Gastrocnemius medialis (tissue), 4 donors: ENCODE measurements at regions of chr16 and their contacts with region 1.

Region 1: DNA sequence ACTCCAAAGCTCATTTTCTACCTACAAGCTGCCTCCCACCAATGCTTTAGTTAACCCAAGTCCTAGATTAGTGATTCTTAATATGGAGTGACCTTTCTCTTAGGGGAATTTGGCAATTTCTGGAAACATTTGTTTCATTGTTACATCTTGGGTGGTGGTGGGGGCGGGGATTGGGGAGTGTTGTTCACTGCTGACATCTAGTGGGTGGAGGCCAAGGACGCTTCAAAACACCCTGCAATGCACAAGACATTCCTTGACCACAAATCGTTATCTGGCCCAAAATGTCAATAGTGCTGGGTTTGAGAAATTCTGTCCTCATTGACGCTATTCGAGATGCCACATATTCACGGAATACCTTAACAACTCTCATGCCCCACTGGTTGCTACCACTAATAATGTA is 282.9 kb downstream of the RBFOX1 start:
- DNase-seq: peak in 1 of 2 donors; percentile 25
- ATAC-seq: peak in 1 of 2 donors; percentile 69
- H3K4me3 ChIP-seq: no peak overlapping the region
- H3K27ac ChIP-seq: no peak overlapping the region
- H3K4me1 ChIP-seq: peaks cover 0 to 4% of the 10 kb centered on the region in 2 donors
- H3K27me3 ChIP-seq: no peaks in the 10 kb centered on the region
- CTCF ChIP-seq: peak in 3 of 5 experiments; percentile 13 to 42 (median 36)
- POLR2A ChIP-seq: no peak

Region 2: GRCh38 chr16:7405166-7405852 is 210.3 kb before region 1 on chr16:
- in situ Hi-C with region 1: loop called in 3 of 4 experiments (anchors 25 kb)
- intact Hi-C with region 1: loop called (anchors 2 kb)
- DNase-seq: peak; percentile 70 to 86
- ATAC-seq: peak; percentile 93 to 97
- H3K4me3 ChIP-seq: peak overlapping the region in 1 of 4 donors; percentile 31
- H3K27ac ChIP-seq: peak overlapping the region; percentile 55 to 75 (median 66)
- H3K4me1 ChIP-seq: peaks cover 45 to 50% of the 10 kb centered on the region in 2 donors
- H3K27me3 ChIP-seq: no peaks in the 10 kb centered on the region
- CTCF ChIP-seq: peak; percentile 48 to 75 (median 59)
- POLR2A ChIP-seq: no peak

Region 3: DNA sequence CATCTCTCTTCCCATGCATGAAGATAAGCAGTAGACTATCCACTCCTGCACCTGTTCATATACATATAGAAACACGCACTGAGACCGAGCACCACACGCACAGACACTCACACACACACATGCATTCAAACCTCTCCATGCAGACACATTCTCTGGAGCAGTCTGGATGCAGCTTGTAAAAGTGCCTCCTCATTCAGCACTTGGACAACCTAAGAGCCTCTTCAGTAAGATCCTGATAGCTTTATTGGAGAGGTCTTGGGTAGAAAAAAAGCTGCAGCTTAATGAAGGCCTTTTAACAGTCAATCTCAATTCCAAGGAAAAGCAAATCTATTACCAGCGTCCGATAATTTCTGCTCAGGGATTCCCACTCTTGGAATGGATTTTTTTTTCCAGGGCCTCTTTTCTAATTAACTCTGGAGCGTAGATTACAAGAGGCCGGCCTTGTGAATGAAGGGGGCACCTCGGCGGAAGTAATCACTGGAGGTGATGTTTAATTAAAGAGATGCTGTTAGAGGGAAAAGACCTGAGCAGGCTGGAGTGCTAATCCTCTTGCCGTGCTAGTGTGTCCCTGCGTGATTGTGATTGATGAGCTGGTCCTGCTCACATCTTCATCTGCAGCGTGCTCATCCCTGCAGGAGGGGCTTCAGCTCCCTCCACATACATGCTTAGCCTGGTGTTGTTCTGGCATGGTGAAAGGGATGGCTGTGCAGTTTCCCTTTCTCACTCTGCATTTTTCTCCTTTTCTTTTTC is 127.8 kb before region 1 on chr16:
- in situ Hi-C with region 1: no loop called
- intact Hi-C with region 1: no loop called
- DNase-seq: no peak
- ATAC-seq: no peak
- H3K4me3 ChIP-seq: no peak overlapping the region
- H3K27ac ChIP-seq: no peak overlapping the region
- H3K4me1 ChIP-seq: peaks cover 2 to 8% of the 10 kb centered on the region in 2 donors
- H3K27me3 ChIP-seq: no peaks in the 10 kb centered on the region
- CTCF ChIP-seq: no peak
- POLR2A ChIP-seq: no peak

Region 4: DNA sequence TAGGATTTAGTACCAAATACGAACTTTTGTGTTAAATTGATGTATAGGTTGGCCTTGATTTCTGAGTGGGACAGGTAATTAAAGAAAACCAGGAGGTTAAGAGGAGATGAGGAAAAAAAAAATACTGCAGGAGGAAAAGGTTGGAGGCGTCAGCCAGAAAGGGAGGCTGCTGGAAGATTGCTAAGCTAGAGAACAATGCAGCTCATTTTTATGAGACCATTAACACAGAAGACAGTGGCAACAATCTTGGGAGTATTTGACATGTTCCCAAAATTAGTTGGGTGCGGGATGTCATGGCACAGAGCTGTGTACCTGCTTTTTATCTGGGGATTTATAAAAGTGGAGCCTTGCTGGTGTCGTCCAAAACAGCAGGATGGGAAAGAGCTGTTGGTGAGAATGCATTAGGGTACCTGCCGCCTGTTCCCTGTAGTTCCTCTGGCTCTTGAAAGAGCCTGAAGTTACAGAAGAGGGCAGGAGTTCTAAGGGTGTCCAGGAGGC is 53.6 kb before region 1 on chr16:
- in situ Hi-C with region 1: no loop called
- intact Hi-C with region 1: no loop called
- DNase-seq: no peak
- ATAC-seq: no peak
- H3K4me3 ChIP-seq: no peak overlapping the region
- H3K27ac ChIP-seq: no peak overlapping the region
- H3K4me1 ChIP-seq: no peaks in the 10 kb centered on the region
- H3K27me3 ChIP-seq: no peaks in the 10 kb centered on the region
- CTCF ChIP-seq: no peak
- POLR2A ChIP-seq: no peak

Region 5: DNA sequence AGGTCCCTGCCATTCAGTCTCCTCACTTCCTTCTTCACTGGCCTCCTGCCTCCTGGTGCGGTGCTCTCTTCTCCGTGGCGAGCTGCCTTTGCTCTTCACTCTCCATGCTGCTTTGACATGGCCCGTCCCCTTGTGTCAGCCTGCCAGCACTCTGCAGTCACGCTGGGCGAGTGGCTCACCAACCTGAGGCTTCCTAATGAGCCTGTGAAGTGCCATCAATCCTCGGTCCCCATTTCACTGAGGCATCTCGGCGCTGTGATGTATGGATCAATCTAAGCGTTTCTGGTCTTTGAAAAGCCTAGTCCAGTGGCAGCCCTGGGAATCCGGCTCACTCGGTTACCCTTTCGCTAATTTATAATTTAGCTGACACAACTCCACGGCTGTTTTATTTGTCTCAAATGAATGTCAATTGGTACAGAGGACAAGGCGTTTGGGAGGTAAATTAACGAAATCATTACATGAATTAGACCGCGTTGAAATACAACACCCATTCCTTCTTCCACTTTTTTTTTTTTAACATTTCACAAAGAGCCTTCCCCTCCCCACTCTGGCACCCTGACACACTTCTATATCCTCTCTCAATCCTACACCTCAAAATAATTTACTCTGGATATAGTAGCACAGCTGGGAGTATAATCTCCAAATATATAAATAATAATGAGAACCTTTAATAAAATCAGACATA is 364.0 kb after region 1 on chr16:
- in situ Hi-C with region 1: no loop called
- intact Hi-C with region 1: no loop called
- DNase-seq: no peak
- ATAC-seq: no peak
- H3K4me3 ChIP-seq: no peak overlapping the region
- H3K27ac ChIP-seq: no peak overlapping the region
- H3K4me1 ChIP-seq: no peaks in the 10 kb centered on the region
- H3K27me3 ChIP-seq: no peaks in the 10 kb centered on the region
- CTCF ChIP-seq: no peak
- POLR2A ChIP-seq: no peak